Sigmoid colon (tissue), 7 donors: ENCODE measurements at regions of chr6 and their contacts with region 1.

Region 1: DNA sequence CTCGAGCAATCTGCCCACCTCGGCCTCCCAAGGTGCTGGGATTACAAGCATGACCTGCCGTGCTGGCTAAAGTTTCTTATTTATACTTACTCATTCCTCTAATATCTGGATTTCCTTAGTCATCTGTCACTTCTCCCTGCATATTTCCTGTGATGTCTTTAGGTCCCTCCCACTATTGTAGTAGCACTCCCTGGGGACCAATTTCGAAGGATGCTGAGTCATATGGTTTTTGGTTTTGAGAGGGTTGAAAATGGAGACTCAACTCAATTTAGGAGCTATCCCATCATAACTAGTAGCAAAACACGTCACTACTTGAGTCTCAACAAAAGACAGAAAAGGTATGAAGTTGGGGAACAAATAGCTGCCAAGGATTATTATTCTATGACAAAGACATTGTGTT is 20.2 kb downstream of the MCUR1 start:
- DNase-seq: no peak
- H3K4me3 ChIP-seq: no peak overlapping the region
- H3K27ac ChIP-seq: no peak overlapping the region
- H3K4me1 ChIP-seq: peaks cover 0 to 5% (median 0%) of the 10 kb centered on the region in 4 donors
- H3K27me3 ChIP-seq: no peaks in the 10 kb centered on the region
- CTCF ChIP-seq: no peak
- EP300 ChIP-seq: no peak
- POLR2A ChIP-seq: no peak

Region 2: GRCh38 chr6:14009431-14009830 is 215.2 kb after region 1 on chr6:
- intact Hi-C with region 1: no loop called
- DNase-seq: no peak
- H3K4me3 ChIP-seq: no peak overlapping the region
- H3K27ac ChIP-seq: no peak overlapping the region
- H3K4me1 ChIP-seq: no peaks in the 10 kb centered on the region
- H3K27me3 ChIP-seq: no peaks in the 10 kb centered on the region
- CTCF ChIP-seq: no peak
- EP300 ChIP-seq: no peak
- POLR2A ChIP-seq: no peak

Region 3: GRCh38 chr6:14066782-14067406 is 272.7 kb after region 1 on chr6:
- intact Hi-C with region 1: loop called (anchors 5 kb)
- DNase-seq: no peak
- H3K4me3 ChIP-seq: no peak overlapping the region
- H3K27ac ChIP-seq: no peak overlapping the region
- H3K4me1 ChIP-seq: no peaks in the 10 kb centered on the region
- H3K27me3 ChIP-seq: no peaks in the 10 kb centered on the region
- CTCF ChIP-seq: peak; percentile 40 to 65 (median 57)
- EP300 ChIP-seq: no peak
- POLR2A ChIP-seq: no peak